ENCODE measurements at regions of chr17 and their contacts with region 1.

Region 1: GRCh38 chr17:16380640-16381495 is at the start of gene UBB:
- DNase-seq: peak; percentile 88
- H3K4me3 ChIP-seq: peak within 1 kb of the TSS; percentile 74
- H3K27me3 ChIP-seq: no peaks in the 10 kb centered on the region
- CTCF ChIP-seq: 0 out of 2 replicates have a peak, but pooled peaks have one; percentile 22
- polyA plus RNA-seq, gene UBB: 3,195 and 3,417 TPM in 2 replicates

Region 2: DNA sequence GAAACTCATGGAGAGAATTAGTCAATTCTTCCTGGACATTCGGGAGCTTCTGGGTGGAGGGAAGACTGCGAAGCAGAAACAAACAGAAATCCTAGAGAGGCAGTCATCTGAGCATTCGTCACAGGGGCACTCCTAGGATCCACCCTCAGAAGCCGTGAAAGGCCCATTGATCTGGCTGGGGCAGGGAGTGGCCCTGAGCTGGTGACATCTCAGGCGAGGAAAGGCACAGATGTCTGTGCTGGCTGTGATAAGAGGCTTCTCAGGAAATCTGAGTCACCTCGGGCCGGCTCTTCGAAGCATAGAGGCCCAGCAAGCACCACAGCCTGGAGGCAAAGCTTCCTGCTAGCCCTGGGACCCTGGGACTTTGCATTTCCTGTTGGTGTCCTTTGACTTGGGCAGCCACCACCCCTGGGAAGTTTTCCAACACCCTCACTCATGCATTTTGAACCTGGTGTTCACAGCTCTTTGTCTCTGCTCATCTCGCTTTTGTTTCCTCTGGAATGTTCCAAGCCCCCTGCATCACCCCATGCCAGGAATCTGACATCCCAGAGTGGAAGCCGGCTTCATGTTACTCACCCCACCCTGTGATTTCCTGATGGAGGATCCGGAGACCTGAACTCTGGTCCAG is 890.1 kb before region 1 on chr17:
- CTCF ChIA-PET with region 1: no interaction called
- POLR2A ChIA-PET with region 1: interaction called, 20 read pairs
- DNase-seq: peak; percentile 40
- H3K4me3 ChIP-seq: no peak overlapping the region
- H3K27me3 ChIP-seq: no peaks in the 10 kb centered on the region
- CTCF ChIP-seq: no peak

Region 3: DNA sequence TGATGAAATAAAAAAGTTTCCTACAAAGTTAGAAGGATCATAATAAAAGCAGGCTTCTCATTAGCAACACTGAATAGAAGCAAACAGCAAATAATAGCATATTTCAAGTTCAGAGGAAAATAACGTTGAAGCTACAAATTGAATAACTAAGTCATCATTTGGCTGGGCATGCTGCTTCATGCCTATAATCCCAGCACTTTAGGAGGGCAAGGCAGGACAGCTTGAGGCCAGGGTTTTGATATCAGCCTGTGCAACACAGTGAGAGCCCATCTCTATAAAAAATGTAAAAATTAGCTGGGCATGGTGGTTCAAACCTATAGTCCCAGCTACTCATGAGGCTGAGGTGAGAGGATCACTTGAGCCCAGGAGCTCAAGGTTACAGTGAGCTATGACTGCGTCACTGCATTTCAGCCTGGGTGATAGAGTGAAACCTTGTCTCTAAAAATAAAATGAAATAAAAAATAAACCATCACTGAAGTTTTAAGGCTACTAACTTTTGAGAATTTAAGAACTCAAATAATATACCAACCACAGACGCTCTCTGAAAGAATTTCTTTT is 191.0 kb before region 1 on chr17:
- CTCF ChIA-PET with region 1: no interaction called
- POLR2A ChIA-PET with region 1: interaction called, 12 read pairs
- DNase-seq: no peak
- H3K4me3 ChIP-seq: no peak overlapping the region
- H3K27me3 ChIP-seq: no peaks in the 10 kb centered on the region
- CTCF ChIP-seq: no peak